BJ (cell line): ENCODE measurements at regions of chr15 and their contacts with region 1.

Region 1: DNA sequence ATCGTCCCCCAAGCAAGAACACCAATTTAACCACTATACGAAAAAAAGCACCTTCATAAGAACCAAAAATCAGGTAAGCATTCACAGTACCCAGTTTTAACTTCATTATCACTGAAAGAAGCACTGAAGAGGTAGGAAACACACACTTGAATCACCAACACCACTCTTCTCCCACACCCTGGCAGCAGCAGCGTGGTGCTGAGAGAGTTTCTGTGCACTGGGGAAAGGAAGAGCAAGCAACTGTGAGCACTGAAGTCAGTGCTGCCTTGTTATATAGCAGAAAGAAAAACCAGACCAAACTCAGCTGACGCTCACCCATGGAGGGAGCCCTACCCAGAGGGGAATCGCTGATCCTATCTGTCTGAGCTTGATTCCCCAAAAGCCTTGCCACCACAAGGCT is 98.2 kb downstream of the DMXL2 start:
- DNase-seq: no peak
- H3K4me3 ChIP-seq: no peak overlapping the region
- H3K27me3 ChIP-seq: no peaks in the 10 kb centered on the region
- CTCF ChIP-seq: no peak

Region 2: GRCh38 chr15:51366960-51367648 is 157.3 kb before region 1 on chr15:
- CTCF ChIA-PET with region 1: no interaction called
- POLR2A ChIA-PET with region 1: no interaction called
- DNase-seq: peak; percentile 67
- H3K4me3 ChIP-seq: no peak overlapping the region
- H3K27me3 ChIP-seq: peaks cover 2% of the 10 kb centered on the region
- CTCF ChIP-seq: peak; percentile 27; the same call in 1 of the 2 replicates

Region 3: GRCh38 chr15:51438526-51438925 is 85.8 kb before region 1 on chr15:
- CTCF ChIA-PET with region 1: no interaction called
- POLR2A ChIA-PET with region 1: no interaction called
- DNase-seq: no peak
- H3K4me3 ChIP-seq: no peak overlapping the region
- H3K27me3 ChIP-seq: no peaks in the 10 kb centered on the region
- CTCF ChIP-seq: no peak

Region 4: GRCh38 chr15:51499379-51499976 is 24.9 kb before region 1 on chr15:
- CTCF ChIA-PET with region 1: interaction called, 11 read pairs
- POLR2A ChIA-PET with region 1: no interaction called
- DNase-seq: no peak
- H3K4me3 ChIP-seq: no peak overlapping the region
- H3K27me3 ChIP-seq: no peaks in the 10 kb centered on the region
- CTCF ChIP-seq: peak; percentile 57

Region 5: DNA sequence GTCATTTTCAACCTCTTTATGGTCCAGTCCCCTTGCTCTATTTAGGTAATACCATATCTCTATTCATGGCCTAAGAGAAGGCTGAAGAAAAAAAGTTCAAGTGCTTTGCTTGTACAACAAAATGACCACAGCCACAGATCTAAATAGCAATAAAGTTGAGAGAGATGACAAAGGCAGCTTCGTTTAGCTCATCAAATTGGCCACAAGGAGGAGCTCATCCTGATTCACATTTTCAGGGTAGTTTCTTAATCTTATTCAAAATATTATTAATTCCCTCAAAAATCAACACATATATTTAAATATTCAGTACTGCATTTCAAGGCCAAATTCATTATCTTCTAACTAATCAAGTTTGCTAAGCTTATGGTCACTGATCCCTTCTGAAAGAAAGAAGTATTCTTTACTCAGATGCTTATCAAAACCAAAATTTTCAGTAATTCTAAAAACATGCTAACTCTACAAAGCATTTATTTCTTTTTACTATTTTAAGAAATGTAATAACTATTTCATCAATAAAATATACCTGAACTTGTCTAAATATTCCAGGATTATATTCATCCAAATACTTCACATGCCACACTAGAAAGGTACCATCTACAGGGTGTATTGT is 12.7 kb after region 1 on chr15:
- CTCF ChIA-PET with region 1: interaction called, 21 read pairs
- POLR2A ChIA-PET with region 1: no interaction called
- DNase-seq: peak; percentile 2
- H3K4me3 ChIP-seq: no peak overlapping the region
- H3K27me3 ChIP-seq: no peaks in the 10 kb centered on the region
- CTCF ChIP-seq: peak; percentile 71